ENCODE measurements at regions of chr3 and their contacts with region 1.

Region 1: GRCh38 chr3:32296256-32297204 is 58.0 kb downstream of the CMTM8 start:
- DNase-seq: peak in 1 of 2 experiments; percentile 51
- H3K4me3 ChIP-seq: no peak overlapping the region
- H3K27ac ChIP-seq: no peak overlapping the region
- H3K4me1 ChIP-seq: peaks cover 33% of the 10 kb centered on the region
- H3K27me3 ChIP-seq: no peaks in the 10 kb centered on the region
- CTCF ChIP-seq: peak; percentile 80

Region 2: GRCh38 chr3:32391643-32392535 is 95.4 kb after region 1 on chr3 and contains the start of gene CMTM7:
- CTCF ChIA-PET with region 1: no interaction called
- POLR2A ChIA-PET with region 1: interaction called, 4 read pairs
- intact Hi-C with region 1: loop called (anchors 2 kb)
- DNase-seq: peak; percentile 54 to 85
- H3K4me3 ChIP-seq: peak within 1 kb of the TSS; percentile 71
- H3K27ac ChIP-seq: peak within 1 kb of the TSS; percentile 44
- H3K4me1 ChIP-seq: 0 out of 2 replicates have a peak, but pooled peaks cover 6% of the 10 kb centered on the region
- H3K27me3 ChIP-seq: no peaks in the 10 kb centered on the region
- CTCF ChIP-seq: no peak
- total RNA-seq, gene CMTM7: 37.1 and 51.6 TPM in 2 replicates

Region 3: GRCh38 chr3:32794487-32795308 is 498.2 kb after region 1 on chr3:
- CTCF ChIA-PET with region 1: interaction called, 16 read pairs
- POLR2A ChIA-PET with region 1: no interaction called
- intact Hi-C with region 1: no loop called
- DNase-seq: peak in 1 of 2 experiments; percentile 78
- H3K4me3 ChIP-seq: no peak overlapping the region
- H3K27ac ChIP-seq: peak overlapping the region; percentile 50
- H3K4me1 ChIP-seq: peaks cover 12% of the 10 kb centered on the region
- H3K27me3 ChIP-seq: no peaks in the 10 kb centered on the region
- CTCF ChIP-seq: no peak